ENCODE measurements at regions of chr9 and their contacts with region 1.

Region 1: DNA sequence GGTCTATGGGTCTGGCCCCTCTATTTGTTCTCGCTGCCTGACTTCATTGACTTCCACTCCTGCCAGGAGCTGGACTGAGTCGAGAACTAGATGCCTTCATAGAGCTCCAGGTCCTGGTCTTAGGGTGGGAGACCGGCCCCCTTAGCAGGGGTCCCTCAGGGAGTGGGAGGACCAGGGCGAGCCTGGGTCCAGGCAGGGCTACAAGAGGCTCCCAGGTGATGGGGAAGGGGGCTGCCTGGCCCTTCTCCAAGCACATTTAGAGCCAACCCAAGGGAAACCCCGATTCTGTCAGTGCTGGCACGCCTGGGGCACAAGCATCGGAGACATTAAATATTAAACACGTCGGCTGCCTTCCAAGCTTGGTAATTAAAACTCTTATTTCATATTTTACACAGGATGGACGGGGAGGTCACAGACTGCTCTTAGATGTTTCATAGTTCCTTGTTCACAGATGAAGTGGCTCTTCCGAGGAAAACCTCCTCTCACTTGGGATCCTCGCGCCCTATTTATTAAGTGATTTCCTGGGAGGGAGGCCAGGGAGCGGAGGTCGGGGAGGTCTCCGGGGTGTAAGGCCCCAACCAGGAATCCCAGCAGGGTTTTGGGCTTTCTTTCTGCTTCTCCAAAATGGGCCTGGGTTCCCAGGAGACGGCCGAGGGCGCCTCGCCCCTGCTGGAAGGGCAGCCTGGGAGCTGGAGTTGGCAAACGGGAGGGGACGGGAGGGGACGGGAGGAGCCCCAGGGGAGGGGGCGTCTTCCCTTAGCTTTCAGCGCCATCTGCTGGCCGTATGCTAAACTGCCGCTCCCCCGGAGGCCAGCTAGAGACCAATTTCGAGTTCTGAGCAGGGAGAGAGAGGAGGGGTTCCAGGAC is 23.4 kb upstream of the ZBTB43 start:
- DNase-seq: peak; percentile 83 to 93 (median 90)
- ATAC-seq: peak; percentile 97
- H3K4me3 ChIP-seq: no peak overlapping the region
- H3K27ac ChIP-seq: no peak overlapping the region
- H3K4me1 ChIP-seq: peaks cover 0 to 3% of the 10 kb centered on the region in 2 experiments; a peak in 1 of 5 replicates
- H3K27me3 ChIP-seq: peaks cover 4 to 43% of the 10 kb centered on the region in 2 experiments; a peak in 4 of 5 replicates
- CTCF ChIP-seq: peak; percentile 88 to 93 (median 90)
- EP300 ChIP-seq: no peak
- POLR2A ChIP-seq: no peak
- RAD21 ChIP-seq: peak; percentile 84 to 88

Region 2: DNA sequence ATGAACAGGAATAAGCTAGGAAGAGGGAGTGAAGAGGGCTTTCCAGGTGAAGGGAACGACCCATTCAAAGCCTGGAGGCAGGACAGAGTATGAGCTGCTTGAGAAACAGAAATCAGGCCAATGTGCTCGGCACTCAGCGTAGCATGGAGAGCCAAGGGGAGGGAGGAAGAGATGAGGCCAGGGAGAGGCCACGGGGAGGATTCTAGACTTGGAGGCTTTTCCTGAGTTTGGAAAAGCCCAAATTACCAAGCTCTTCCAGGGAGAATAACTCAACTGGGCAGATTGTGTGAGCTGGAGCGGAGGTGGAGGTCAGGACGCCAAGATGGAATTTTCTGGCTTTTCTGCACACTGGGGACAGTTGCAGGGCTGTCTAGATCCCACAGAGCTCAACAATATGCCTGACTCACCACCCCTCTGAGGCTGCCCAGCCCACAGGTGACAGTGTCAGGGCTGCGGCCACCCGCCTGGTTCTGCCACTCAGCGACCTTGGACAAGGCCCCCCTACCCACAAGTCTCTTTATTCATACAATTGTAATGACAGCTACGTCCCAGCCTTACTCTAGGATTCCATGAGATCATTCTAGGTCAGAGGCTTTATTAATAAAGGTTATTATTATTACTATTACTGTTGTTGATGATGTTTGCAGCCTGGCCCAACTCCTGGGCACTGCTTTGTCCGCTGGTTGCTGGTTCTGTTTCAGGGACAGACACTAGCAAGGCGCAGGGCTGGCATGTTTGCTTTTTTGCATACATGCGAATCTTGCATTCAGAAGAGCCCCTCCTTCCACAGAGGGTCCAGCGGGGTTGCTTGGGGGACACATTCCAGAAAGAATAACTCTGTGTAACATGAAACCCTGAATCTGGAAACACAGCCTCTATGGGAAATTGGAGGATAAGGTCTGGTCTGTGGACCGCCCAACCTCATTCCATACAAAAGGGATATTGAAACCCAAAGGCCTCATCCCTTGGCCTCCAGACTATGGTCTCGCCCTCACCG is 177.1 kb before region 1 on chr9:
- CTCF ChIA-PET with region 1: no interaction called
- POLR2A ChIA-PET with region 1: no interaction called
- in situ Hi-C with region 1: loop called (anchors 5 kb)
- intact Hi-C with region 1: no loop called
- DNase-seq: no peak
- ATAC-seq: no peak
- H3K4me3 ChIP-seq: no peak overlapping the region
- H3K27ac ChIP-seq: no peak overlapping the region
- H3K4me1 ChIP-seq: no peaks in the 10 kb centered on the region
- H3K27me3 ChIP-seq: peaks cover 0 to 44% of the 10 kb centered on the region in 2 experiments; a peak in 4 of 5 replicates
- CTCF ChIP-seq: no peak
- EP300 ChIP-seq: no peak
- POLR2A ChIP-seq: no peak
- RAD21 ChIP-seq: no peak

Region 3: DNA sequence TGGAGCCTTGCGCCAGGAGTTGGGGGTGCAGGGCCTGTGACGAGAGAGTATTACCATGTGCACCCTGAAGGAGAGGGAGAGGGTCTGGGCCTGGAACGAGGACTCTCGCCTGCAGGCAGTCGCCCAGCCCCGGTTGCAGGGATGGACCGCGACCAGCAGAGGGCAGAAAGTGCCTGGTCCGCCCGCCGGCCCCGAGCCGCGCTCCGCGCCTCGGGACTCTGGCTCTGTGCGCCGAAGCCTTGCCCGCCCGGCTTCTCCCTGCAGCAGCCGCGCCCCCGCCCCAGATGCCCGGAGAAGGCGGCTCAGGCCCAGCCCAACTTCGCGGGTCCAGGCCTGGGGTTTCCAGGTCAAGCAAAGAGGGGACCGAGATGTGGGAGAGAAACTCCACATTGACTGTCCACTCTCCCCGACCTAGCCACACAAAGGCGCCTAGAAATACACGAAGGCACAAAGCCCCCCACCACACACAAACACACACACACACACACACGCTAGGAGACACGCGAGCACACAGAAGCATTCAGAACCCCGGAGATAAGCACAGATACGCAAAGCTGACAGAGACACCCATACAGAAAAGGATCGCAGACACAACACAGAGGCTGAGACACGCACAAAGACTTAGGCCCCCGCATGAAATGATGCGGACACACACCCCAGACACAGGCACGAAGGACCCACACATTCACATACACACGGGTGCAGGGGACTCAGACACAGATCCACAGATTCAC is 169.7 kb before region 1 on chr9:
- CTCF ChIA-PET with region 1: interaction called, 15 read pairs
- POLR2A ChIA-PET with region 1: no interaction called
- in situ Hi-C with region 1: loop called (anchors 5 kb)
- intact Hi-C with region 1: loop called (anchors 2 kb)
- DNase-seq: peak; percentile 69 to 84 (median 79)
- ATAC-seq: peak; percentile 98
- H3K4me3 ChIP-seq: no peak overlapping the region
- H3K27ac ChIP-seq: no peak overlapping the region; the same call in 2 of the 3 replicates
- H3K4me1 ChIP-seq: peaks cover 0 to 27% of the 10 kb centered on the region in 2 experiments; a peak in 1 of 5 replicates
- H3K27me3 ChIP-seq: peaks cover 15 to 72% of the 10 kb centered on the region in 2 experiments; a peak in 4 of 5 replicates
- CTCF ChIP-seq: peak; percentile 67 to 84 (median 75)
- EP300 ChIP-seq: no peak
- POLR2A ChIP-seq: no peak
- RAD21 ChIP-seq: peak; percentile 42 to 74

Region 4: GRCh38 chr9:126704873-126705766 is 76.3 kb before region 1 on chr9:
- CTCF ChIA-PET with region 1: interaction called, 43 read pairs
- POLR2A ChIA-PET with region 1: interaction called, 10 read pairs
- in situ Hi-C with region 1: no loop called
- intact Hi-C with region 1: loop called (anchors 1 kb)
- DNase-seq: peak; percentile 82 to 89 (median 86)
- ATAC-seq: peak; percentile 82
- H3K4me3 ChIP-seq: no peak overlapping the region; the same call in 1 of the 2 replicates
- H3K27ac ChIP-seq: no peak overlapping the region
- H3K4me1 ChIP-seq: peaks cover 16 to 31% of the 10 kb centered on the region in 2 experiments; a peak in 4 of 5 replicates
- H3K27me3 ChIP-seq: peaks cover 4 to 26% of the 10 kb centered on the region in 2 experiments; a peak in 2 of 5 replicates
- CTCF ChIP-seq: peak; percentile 80 to 90 (median 87)
- EP300 ChIP-seq: no peak
- POLR2A ChIP-seq: no peak
- RAD21 ChIP-seq: peak; percentile 57 to 74

Region 5: DNA sequence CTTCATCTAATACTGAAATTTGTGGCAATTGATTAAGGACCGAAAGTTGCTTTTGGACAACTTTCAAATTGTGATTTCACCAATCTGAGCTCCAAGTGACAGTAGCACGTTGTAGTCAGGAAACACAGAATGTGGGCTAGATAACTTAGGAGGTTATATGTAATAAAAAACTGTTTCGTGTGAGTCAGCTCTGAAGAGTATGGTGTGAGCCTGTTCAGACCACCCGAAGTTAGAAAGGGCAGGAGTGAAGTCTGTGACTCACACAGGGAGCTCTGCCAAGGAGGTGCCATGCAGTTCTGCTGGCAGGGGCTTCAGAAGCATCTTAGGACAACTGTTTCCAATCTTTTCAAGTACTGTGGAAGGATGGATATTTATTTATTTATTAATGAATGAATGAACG is 62.7 kb after region 1 on chr9:
- CTCF ChIA-PET with region 1: no interaction called
- POLR2A ChIA-PET with region 1: no interaction called
- in situ Hi-C with region 1: no loop called
- intact Hi-C with region 1: no loop called
- DNase-seq: no peak
- ATAC-seq: no peak
- H3K4me3 ChIP-seq: no peak overlapping the region
- H3K27ac ChIP-seq: no peak overlapping the region
- H3K4me1 ChIP-seq: peaks cover 8 to 17% of the 10 kb centered on the region in 2 experiments
- H3K27me3 ChIP-seq: peaks cover 0 to 9% of the 10 kb centered on the region in 2 experiments; a peak in 3 of 5 replicates
- CTCF ChIP-seq: no peak
- EP300 ChIP-seq: no peak
- POLR2A ChIP-seq: no peak
- RAD21 ChIP-seq: no peak